ENCODE measurements at regions of chr10 and their contacts with region 1.

Region 1: DNA sequence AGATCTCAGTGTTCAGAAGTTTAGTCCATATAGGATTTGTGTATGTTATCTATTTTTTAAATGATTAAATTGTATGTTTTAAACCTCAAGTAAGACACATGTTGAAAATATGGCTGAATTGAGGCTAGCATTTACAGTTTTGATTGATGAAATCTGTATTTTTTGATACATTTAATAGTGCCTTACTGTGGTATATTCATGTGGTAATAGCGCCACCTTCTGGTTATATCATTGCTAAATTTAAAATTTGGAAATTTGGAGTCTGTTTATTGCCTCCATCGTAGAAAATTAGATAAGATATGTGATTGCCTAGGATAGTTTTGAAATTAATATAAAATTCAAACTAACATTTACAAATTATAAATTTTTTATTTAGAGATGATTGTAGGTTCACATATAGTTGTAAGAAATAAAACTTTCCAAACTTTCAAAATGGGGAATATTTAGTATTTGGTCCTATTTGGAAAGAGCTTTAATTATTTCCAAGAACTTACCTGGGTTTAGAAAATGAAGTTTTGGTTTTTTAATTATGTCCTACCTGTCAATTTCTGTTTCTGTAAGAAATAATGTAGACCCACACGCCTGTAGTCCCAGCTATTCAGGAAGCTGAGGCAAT is 19.1 kb upstream of the ARMS2 start:
- DNase-seq: peak; percentile 38 to 72 (median 65)
- H3K4me3 ChIP-seq: no peak overlapping the region
- H3K27ac ChIP-seq: no peak overlapping the region
- H3K4me1 ChIP-seq: no peaks in the 10 kb centered on the region
- H3K27me3 ChIP-seq: peaks cover 0 to 2% (median 0%) of the 10 kb centered on the region in 5 experiments

Region 2: GRCh38 chr10:122298598-122299301 is 136.6 kb before region 1 on chr10:
- CTCF ChIA-PET with region 1: interaction called, 58 read pairs
- POLR2A ChIA-PET with region 1: no interaction called
- DNase-seq: peak; percentile 61 to 84 (median 79)
- H3K4me3 ChIP-seq: peak overlapping the region in 2 of 7 experiments; percentile 36 to 45
- H3K27ac ChIP-seq: no peak overlapping the region
- H3K4me1 ChIP-seq: peaks cover 0 to 3% (median 0%) of the 10 kb centered on the region in 4 experiments
- H3K27me3 ChIP-seq: peaks cover 0 to 5% (median 0%) of the 10 kb centered on the region in 5 experiments

Region 3: GRCh38 chr10:122342293-122343134 is 92.8 kb before region 1 on chr10:
- CTCF ChIA-PET with region 1: interaction called, 65 read pairs
- POLR2A ChIA-PET with region 1: no interaction called
- DNase-seq: peak; percentile 27 to 70 (median 58)
- H3K4me3 ChIP-seq: no peak overlapping the region
- H3K27ac ChIP-seq: no peak overlapping the region
- H3K4me1 ChIP-seq: no peaks in the 10 kb centered on the region
- H3K27me3 ChIP-seq: peaks cover 0 to 3% (median 0%) of the 10 kb centered on the region in 5 experiments

Measured in common myeloid progenitor, CD34-positive (primary cell).